ENCODE measurements at regions of chr6 and their contacts with region 1.

Region 1: DNA sequence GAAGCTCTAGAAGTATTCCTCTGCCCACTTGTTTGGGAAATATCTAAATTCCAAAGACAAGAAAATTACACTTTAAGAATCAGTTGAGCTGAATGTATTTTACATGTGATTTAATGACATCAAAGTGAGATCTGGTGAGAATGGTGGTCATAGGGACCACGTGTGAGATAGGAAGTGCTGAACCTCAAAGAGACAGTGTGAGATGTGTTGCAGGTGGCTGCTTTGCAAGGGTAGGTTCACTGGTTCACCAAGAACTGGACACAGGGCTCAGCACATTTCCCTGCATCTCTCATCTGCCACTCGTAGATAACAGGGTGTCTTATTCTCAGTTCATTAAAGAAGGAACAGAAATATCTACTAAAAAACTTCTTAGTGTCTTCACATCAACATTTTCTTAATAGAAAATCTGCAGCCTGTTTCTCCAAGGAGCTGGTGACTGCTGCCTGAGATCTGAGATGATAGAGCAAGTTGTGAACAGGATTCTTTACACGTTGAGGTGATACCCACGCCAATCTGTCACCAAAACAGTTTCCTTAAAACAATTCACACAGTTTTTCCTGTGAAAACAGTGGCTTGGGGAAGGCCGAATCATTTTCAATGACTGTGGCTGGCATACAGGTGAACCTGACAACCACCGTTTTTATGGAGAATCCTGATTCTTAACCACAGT is 7.2 kb downstream of the CCR6 start:
- DNase-seq: peak; percentile 63
- CTCF ChIP-seq: no peak

Region 2: DNA sequence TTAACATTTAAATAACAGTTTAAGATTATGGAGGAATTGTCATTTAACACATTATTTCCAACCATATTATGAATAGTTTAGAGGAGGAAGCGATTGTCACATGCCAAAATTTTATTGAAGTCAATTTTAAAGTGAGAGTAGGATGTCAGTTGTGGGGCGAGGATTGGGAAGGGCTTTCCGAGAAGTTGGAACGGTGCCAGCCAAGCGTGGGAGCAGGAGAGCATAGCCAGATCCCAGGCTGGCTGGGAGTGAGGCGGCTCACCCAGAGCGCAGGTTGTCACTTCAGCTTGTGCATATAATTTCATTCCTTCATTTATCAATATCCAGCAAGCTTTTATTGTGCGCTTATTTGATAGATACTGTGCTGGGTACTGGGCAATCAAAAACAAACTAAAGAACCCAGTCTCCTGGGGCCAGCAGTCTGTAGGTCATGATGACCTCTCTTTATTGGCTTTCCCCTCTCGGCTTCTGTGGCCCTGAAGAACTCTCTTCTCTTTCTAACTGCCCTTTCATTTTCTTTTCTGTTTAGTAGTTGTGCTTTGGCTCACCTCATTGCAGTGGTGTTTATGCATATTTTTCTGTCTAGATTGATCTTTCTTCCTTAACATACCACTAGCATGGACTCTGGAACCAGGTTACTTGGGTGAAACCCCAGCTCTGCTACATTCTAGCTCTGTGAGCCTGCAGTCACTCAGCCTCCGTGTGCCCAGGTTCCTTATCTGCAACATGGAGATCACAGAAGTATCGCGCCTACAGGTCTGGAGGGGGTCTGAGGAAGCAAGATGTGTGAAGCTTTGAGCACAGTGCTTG is 124.6 kb before region 1 on chr6:
- in situ Hi-C with region 1: loop called (anchors 10 kb)
- DNase-seq: no peak
- CTCF ChIP-seq: no peak

Region 3: GRCh38 chr6:167089291-167090142 is 40.6 kb before region 1 on chr6:
- in situ Hi-C with region 1: loop called (anchors 5 kb)
- DNase-seq: no peak
- CTCF ChIP-seq: no peak

Region 4: GRCh38 chr6:167255918-167256553 is 125.9 kb after region 1 on chr6:
- in situ Hi-C with region 1: no loop called
- DNase-seq: no peak
- CTCF ChIP-seq: no peak

Measured in GM13976 (cell line).